Transverse colon (tissue), 4 donors: ENCODE measurements at regions of chr1 and their contacts with region 1.

Region 1: DNA sequence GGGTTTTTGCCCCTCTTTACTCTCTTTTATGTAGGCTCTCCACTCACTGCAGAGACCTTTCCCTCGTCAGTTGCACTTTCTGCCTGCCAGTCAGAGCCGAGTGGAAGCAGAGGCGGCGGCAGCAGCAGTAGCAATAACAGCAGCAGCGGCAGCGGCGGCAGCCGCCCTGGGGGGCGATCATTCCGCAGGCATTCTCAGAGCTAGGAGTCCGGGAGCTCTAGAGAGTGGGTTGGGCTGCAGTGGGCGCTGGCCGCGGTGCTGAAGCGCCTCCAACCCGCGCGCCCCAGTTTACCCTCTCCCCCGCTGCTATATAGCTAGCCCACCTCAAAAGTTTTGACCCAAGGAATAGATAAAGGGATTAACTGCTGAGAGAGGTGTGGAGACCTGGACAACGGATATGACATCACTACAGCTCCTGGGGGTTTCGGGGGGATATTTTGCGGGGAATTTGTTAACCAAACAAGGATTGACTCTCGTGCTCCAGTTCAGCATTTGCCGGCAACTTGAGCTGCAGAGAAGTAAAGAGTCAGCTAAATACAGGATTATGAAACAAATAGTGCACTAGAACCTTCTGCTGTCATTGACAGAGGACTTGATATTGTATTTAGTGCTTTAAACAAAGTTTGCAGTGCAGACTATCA is at the start of gene OLFM3:
- DNase-seq: no peak
- H3K4me3 ChIP-seq: no peak within 1 kb of the TSS
- H3K27ac ChIP-seq: no peak within 1 kb of the TSS
- H3K4me1 ChIP-seq: peaks cover 0 to 4% (median 0%) of the 10 kb centered on the region in 4 donors
- H3K27me3 ChIP-seq: peaks cover 38% of the 10 kb centered on the region
- CTCF ChIP-seq: no peak
- EP300 ChIP-seq: no peak
- POLR2A ChIP-seq: no peak
- total RNA-seq, gene OLFM3: 0.55 TPM in 1 of 4 donors, not detected in the others

Region 2: DNA sequence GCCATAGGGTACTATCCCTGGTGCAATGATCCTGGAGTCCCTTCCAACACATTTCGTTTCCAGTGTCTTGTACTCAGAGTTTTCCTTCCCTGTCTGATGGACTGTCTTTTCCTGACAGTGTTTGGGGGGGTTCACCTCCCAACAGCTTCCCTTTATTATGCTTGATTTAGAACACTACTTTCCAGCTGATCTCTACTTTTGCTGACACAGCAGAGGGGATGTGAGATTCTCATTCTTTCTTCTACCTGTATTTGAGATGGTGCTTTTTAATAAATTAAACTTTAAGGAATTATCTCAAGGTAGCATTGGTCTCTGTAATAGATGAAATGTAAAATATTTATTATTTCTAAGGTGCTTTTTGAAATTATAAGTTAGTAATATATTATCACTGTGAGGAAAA is 1986.1 kb before region 1 on chr1:
- in situ Hi-C with region 1: no loop called
- intact Hi-C with region 1: no loop called
- DNase-seq: no peak
- H3K4me3 ChIP-seq: no peak overlapping the region
- H3K27ac ChIP-seq: no peak overlapping the region
- H3K4me1 ChIP-seq: no peaks in the 10 kb centered on the region
- H3K27me3 ChIP-seq: no peaks in the 10 kb centered on the region
- CTCF ChIP-seq: no peak
- EP300 ChIP-seq: no peak
- POLR2A ChIP-seq: no peak

Region 3: GRCh38 chr1:102186536-102186935 is 189.6 kb after region 1 on chr1:
- in situ Hi-C with region 1: loop called in 2 of 4 experiments (anchors 10 to 25 kb)
- intact Hi-C with region 1: no loop called
- DNase-seq: no peak
- H3K4me3 ChIP-seq: no peak overlapping the region
- H3K27ac ChIP-seq: no peak overlapping the region
- H3K4me1 ChIP-seq: no peaks in the 10 kb centered on the region
- H3K27me3 ChIP-seq: no peaks in the 10 kb centered on the region
- CTCF ChIP-seq: no peak
- EP300 ChIP-seq: no peak
- POLR2A ChIP-seq: no peak

Region 4: DNA sequence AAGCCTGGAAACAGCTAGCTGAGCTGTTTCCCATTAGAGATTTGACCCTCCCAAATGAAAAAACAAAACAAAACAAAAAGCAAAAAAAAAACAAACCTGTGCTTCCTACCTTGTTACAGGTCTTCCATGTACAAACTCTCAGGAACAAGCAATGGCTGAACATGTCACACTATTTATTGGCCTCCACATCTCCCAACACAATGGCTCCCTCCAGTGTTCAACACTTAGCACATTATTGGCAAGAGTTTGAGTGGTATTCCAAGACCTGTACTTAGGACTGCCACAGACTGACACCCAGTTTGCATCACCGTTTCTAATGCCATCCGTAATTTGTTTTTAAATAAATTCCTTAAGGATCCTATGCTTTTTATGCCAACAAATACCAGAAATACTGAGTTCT is 194.8 kb after region 1 on chr1:
- in situ Hi-C with region 1: loop called in 2 of 4 experiments (anchors 10 to 25 kb)
- intact Hi-C with region 1: no loop called
- DNase-seq: peak; percentile 21
- H3K4me3 ChIP-seq: no peak overlapping the region
- H3K27ac ChIP-seq: no peak overlapping the region
- H3K4me1 ChIP-seq: no peaks in the 10 kb centered on the region
- H3K27me3 ChIP-seq: no peaks in the 10 kb centered on the region
- CTCF ChIP-seq: peak; percentile 24 to 65 (median 45)
- EP300 ChIP-seq: no peak
- POLR2A ChIP-seq: no peak